Naive thymus-derived CD4-positive, alpha-beta T cell (primary cell): ENCODE measurements at regions of chr16 and their contacts with region 1.

Region 1: GRCh38 chr16:67833418-67834241 is 8.5 kb upstream of the THAP11 start:
- DNase-seq: peak; percentile 83 to 92 (median 89)
- ATAC-seq: peak; percentile 100
- H3K4me3 ChIP-seq: peak overlapping the region; percentile 82
- H3K4me3 Mint-ChIP-seq: peak overlapping the region; percentile 90 to 96 (median 93)
- H3K27ac ChIP-seq: peak overlapping the region; percentile 70
- H3K27ac Mint-ChIP-seq: peak overlapping the region; percentile 73 to 93 (median 82)
- H3K4me1 ChIP-seq: peaks cover 8 to 9% of the 10 kb centered on the region in 2 donors
- H3K4me1 Mint-ChIP-seq: peaks cover 11 to 19% (median 15%) of the 10 kb centered on the region in 7 donors
- H3K27me3 ChIP-seq: no peaks in the 10 kb centered on the region
- H3K27me3 Mint-ChIP-seq: no peaks in the 10 kb centered on the region

Region 2: DNA sequence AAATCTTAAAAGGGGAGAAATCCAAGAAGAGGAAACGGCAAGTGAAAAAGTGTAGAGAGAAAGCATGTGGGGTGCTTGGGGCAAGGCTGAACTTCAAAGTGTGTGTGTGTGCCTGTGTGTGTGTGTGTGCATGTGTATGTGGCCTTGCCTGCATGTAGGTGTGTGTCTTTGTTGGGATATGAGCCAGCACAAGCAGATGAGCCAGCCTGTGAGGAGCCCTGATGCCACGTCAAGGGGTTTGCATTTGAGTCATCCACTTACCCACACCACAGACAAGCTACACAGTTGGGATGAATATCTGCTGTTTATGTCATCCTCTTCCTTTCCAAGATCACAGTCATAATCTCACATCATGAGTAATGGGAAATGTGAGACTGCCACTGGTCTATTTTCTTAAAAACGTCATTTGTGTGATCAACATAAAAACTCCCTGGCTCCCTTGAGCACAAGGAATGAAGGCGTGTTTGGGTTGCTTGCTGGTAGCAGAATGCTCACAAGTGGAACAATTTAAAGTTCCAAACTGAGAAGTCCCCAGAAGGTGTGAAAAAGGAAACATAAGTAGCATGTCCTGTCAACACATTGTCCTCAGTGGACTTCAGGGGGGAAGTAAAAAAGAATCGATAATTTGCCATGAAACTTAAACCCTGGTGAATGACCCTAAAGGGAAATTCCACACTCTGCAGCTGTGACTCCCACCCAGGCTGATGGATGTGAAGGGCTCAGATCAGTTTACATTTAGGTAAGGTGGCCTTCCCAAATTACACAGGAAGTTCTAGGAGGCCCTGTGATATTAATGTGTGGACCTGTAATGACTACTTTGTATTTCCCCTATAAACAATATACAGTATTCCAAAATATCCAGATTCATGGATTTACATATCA is 521.8 kb before region 1 on chr16:
- CTCF ChIA-PET with region 1: no interaction called
- POLR2A ChIA-PET with region 1: no interaction called
- intact Hi-C with region 1: no loop called
- DNase-seq: peak in 1 of 9 donors; percentile 76
- ATAC-seq: peak; percentile 32
- H3K4me3 ChIP-seq: no peak overlapping the region
- H3K4me3 Mint-ChIP-seq: peak overlapping the region in 1 of 10 donors; percentile 20
- H3K27ac ChIP-seq: no peak overlapping the region
- H3K27ac Mint-ChIP-seq: peak overlapping the region in 1 of 9 donors; percentile 83
- H3K4me1 ChIP-seq: no peaks in the 10 kb centered on the region
- H3K4me1 Mint-ChIP-seq: peaks cover 0 to 29% (median 4%) of the 10 kb centered on the region in 7 donors
- H3K27me3 ChIP-seq: peaks cover 0 to 2% of the 10 kb centered on the region in 2 donors
- H3K27me3 Mint-ChIP-seq: peaks cover 0 to 8% (median 2%) of the 10 kb centered on the region in 5 donors

Region 3: GRCh38 chr16:67719048-67719777 is 114.4 kb before region 1 on chr16 and contains the start of gene GFOD2:
- CTCF ChIA-PET with region 1: no interaction called
- POLR2A ChIA-PET with region 1: interaction called, 3 read pairs
- intact Hi-C with region 1: loop called in 1 of 2 experiments (anchors 2 kb)
- DNase-seq: peak; percentile 94 to 100 (median 96)
- ATAC-seq: peak; percentile 96
- H3K4me3 ChIP-seq: peak within 1 kb of the TSS; percentile 95
- H3K4me3 Mint-ChIP-seq: peak within 1 kb of the TSS; percentile 90 to 99 (median 94)
- H3K27ac ChIP-seq: peak within 1 kb of the TSS; percentile 88
- H3K27ac Mint-ChIP-seq: peak within 1 kb of the TSS; percentile 91 to 99 (median 98)
- H3K4me1 ChIP-seq: peaks cover 15 to 16% of the 10 kb centered on the region in 2 donors
- H3K4me1 Mint-ChIP-seq: peaks cover 19 to 51% (median 39%) of the 10 kb centered on the region in 7 donors
- H3K27me3 ChIP-seq: no peaks in the 10 kb centered on the region
- H3K27me3 Mint-ChIP-seq: no peaks in the 10 kb centered on the region
- total RNA-seq, gene GFOD2: 6.3 to 13.4 (median 11.4) TPM

Region 4: GRCh38 chr16:67847064-67847861 is 13.6 kb after region 1 on chr16 and contains the start of gene CENPT:
- CTCF ChIA-PET with region 1: interaction called, 4 read pairs
- POLR2A ChIA-PET with region 1: interaction called, 22 read pairs
- intact Hi-C with region 1: loop called (anchors 1 kb)
- DNase-seq: no peak
- ATAC-seq: peak; percentile 62
- H3K4me3 ChIP-seq: peak within 1 kb of the TSS; percentile 88
- H3K4me3 Mint-ChIP-seq: peak within 1 kb of the TSS; percentile 87 to 97 (median 92)
- H3K27ac ChIP-seq: peak within 1 kb of the TSS; percentile 99
- H3K27ac Mint-ChIP-seq: peak within 1 kb of the TSS; percentile 84 to 98 (median 92)
- H3K4me1 ChIP-seq: peaks cover 41 to 44% of the 10 kb centered on the region in 2 donors
- H3K4me1 Mint-ChIP-seq: peaks cover 19 to 65% (median 41%) of the 10 kb centered on the region in 7 donors
- H3K27me3 ChIP-seq: no peaks in the 10 kb centered on the region
- H3K27me3 Mint-ChIP-seq: no peaks in the 10 kb centered on the region
- total RNA-seq, gene CENPT: 56.7 to 128 (median 100) TPM

Region 5: GRCh38 chr16:67872786-67873537 is 39.3 kb after region 1 on chr16 and contains the start of gene EDC4:
- CTCF ChIA-PET with region 1: no interaction called
- POLR2A ChIA-PET with region 1: interaction called, 4 read pairs
- intact Hi-C with region 1: loop called (anchors 1 to 5 kb)
- DNase-seq: peak; percentile 75 to 96 (median 83)
- ATAC-seq: peak; percentile 96
- H3K4me3 ChIP-seq: peak within 1 kb of the TSS; percentile 88
- H3K4me3 Mint-ChIP-seq: peak within 1 kb of the TSS; percentile 88 to 96 (median 94)
- H3K27ac ChIP-seq: peak within 1 kb of the TSS; percentile 91
- H3K27ac Mint-ChIP-seq: peak within 1 kb of the TSS; percentile 90 to 97 (median 92)
- H3K4me1 ChIP-seq: peaks cover 19 to 30% of the 10 kb centered on the region in 2 donors
- H3K4me1 Mint-ChIP-seq: peaks cover 25 to 41% (median 36%) of the 10 kb centered on the region in 7 donors
- H3K27me3 ChIP-seq: no peaks in the 10 kb centered on the region
- H3K27me3 Mint-ChIP-seq: no peaks in the 10 kb centered on the region
- total RNA-seq, gene EDC4: 103 to 166 (median 122) TPM

Region 6: DNA sequence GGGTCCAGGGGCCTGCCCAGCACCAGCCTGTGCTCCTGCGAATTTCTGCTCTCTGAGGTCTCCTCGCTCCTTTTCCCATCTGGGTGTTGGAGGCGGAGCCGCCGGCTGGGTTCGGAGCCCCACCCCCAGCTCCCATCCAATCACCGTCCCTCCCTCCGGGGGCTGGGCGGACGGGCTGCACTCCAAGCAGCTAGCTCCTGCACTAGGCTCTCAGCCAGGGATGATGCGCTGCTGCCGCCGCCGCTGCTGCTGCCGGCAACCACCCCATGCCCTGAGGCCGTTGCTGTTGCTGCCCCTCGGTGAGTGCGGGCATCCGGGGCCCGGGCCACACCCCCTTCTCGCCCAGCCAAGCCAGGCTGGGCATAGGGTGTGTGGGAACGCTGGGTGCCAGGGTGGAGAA is 51.1 kb after region 1 on chr16 and contains the start of gene NRN1L:
- CTCF ChIA-PET with region 1: no interaction called
- POLR2A ChIA-PET with region 1: no interaction called
- intact Hi-C with region 1: no loop called
- DNase-seq: no peak
- ATAC-seq: no peak
- H3K4me3 ChIP-seq: no peak within 1 kb of the TSS
- H3K4me3 Mint-ChIP-seq: no peak within 1 kb of the TSS
- H3K27ac ChIP-seq: no peak within 1 kb of the TSS
- H3K27ac Mint-ChIP-seq: peak within 1 kb of the TSS in 5 of 9 donors; percentile 32 to 57 (median 41)
- H3K4me1 ChIP-seq: no peaks in the 10 kb centered on the region
- H3K4me1 Mint-ChIP-seq: peaks cover 0 to 6% (median 0%) of the 10 kb centered on the region in 7 donors
- H3K27me3 ChIP-seq: no peaks in the 10 kb centered on the region
- H3K27me3 Mint-ChIP-seq: no peaks in the 10 kb centered on the region
- total RNA-seq, gene NRN1L: 1.1 to 6.4 (median 3.2) TPM